GM13977 (cell line): ENCODE measurements at regions of chr16 and their contacts with region 1.

Region 1: GRCh38 chr16:8878521-8878911 is 3.6 kb upstream of the LITAFD start:
- DNase-seq: no peak
- CTCF ChIP-seq: no peak

Region 2: GRCh38 chr16:8660841-8661301 is 217.6 kb before region 1 on chr16:
- in situ Hi-C with region 1: loop called (anchors 10 kb)
- DNase-seq: peak; percentile 74
- CTCF ChIP-seq: peak; percentile 95